ENCODE measurements at regions of chr15 and their contacts with region 1.

Region 1: DNA sequence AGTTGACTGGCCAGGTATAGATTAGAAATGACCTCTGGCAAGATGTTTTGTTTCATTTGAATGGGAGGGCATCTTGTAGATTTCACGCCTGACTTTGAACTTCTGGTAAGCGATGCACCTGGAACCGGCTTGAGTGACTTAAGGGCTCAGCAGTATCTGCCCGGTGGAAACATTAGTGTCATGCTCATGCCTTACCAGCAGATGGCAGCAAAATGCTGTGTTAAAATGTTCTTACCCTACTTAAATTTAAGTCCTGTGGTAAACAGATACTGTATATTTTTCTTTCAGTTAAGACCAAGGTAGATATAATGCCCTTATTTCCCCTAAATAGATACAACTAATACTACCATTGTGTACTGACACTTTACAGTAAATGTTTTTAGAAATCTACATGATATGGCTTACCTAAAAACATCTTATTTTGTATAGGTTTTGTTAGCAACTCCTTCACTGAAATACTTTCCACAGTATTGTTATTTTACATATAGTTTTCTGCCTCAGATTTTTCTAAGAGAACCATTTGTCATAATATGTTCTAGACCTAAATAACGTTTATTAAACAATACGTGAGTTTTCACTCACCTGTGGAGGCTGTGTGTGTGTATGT is 25.5 kb downstream of the ASB7 start:
- DNase-seq: peak in 2 of 3 donors; percentile 16 to 57
- ATAC-seq: peak; percentile 74 to 79
- H3K4me3 ChIP-seq: no peak overlapping the region
- H3K27ac ChIP-seq: no peak overlapping the region
- H3K4me1 ChIP-seq: no peaks in the 10 kb centered on the region
- H3K27me3 ChIP-seq: no peaks in the 10 kb centered on the region

Region 2: GRCh38 chr15:100873029-100873677 is 245.3 kb after region 1 on chr15:
- intact Hi-C with region 1: loop called (anchors 2 to 5 kb)
- DNase-seq: no peak
- ATAC-seq: peak; percentile 61 to 71
- H3K4me3 ChIP-seq: no peak overlapping the region
- H3K27ac ChIP-seq: no peak overlapping the region
- H3K4me1 ChIP-seq: no peaks in the 10 kb centered on the region
- H3K27me3 ChIP-seq: no peaks in the 10 kb centered on the region

Region 3: GRCh38 chr15:100909991-100910955 is 282.4 kb after region 1 on chr15:
- intact Hi-C with region 1: loop called in 1 of 4 experiments (anchors 5 kb)
- DNase-seq: peak in 1 of 3 donors; percentile 23
- ATAC-seq: peak; percentile 27 to 34
- H3K4me3 ChIP-seq: no peak overlapping the region
- H3K27ac ChIP-seq: no peak overlapping the region
- H3K4me1 ChIP-seq: no peaks in the 10 kb centered on the region
- H3K27me3 ChIP-seq: no peaks in the 10 kb centered on the region

Region 4: GRCh38 chr15:101008158-101009139 is 380.6 kb after region 1 on chr15:
- intact Hi-C with region 1: loop called (anchors 2 to 5 kb)
- DNase-seq: peak; percentile 83 to 93 (median 93)
- ATAC-seq: peak; percentile 86 to 88
- H3K4me3 ChIP-seq: peak overlapping the region; percentile 25
- H3K27ac ChIP-seq: no peak overlapping the region
- H3K4me1 ChIP-seq: no peaks in the 10 kb centered on the region
- H3K27me3 ChIP-seq: no peaks in the 10 kb centered on the region

Region 5: DNA sequence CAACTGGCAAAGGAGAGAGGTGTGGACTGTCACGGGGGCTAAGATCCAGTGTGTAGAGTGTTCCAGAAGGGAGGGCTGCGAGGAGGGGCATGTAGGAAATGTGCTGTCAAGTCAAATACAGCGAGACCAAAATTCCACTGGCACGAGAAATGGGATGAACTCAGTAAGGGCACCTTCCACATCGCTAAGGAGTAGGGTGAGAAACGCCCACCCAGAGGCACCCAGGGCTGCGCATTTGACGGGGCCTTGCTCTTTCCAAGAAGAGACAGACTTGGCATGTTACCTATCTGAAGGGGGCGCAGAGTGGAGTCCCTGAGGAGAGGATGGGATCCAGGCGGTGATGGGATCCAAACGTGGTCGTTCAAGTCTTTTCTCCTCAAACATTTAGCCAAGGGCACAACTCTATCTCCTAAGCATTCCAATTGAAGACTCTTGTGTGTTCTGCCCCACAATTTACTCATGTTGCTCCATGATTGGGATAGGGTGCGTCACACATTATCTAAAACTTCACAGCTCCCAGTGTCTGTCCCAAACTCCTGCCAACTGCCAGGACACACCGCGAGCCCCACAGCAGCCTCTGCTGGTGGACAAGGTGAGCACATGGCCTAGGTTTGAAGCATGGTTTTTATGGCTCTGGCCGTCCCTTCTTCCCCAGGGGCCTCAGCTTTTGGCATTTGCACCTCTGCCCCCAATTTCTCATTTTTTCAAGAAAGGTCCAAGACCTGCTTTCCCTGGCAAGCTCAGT is 641.8 kb after region 1 on chr15:
- intact Hi-C with region 1: loop called in 1 of 4 experiments (anchors 10 kb)
- DNase-seq: peak; percentile 59 to 79 (median 69)
- ATAC-seq: peak; percentile 48 to 56
- H3K4me3 ChIP-seq: no peak overlapping the region
- H3K27ac ChIP-seq: no peak overlapping the region
- H3K4me1 ChIP-seq: no peaks in the 10 kb centered on the region
- H3K27me3 ChIP-seq: no peaks in the 10 kb centered on the region

Measured in right cardiac atrium (tissue), 5 donors.